CD8-positive, alpha-beta T cell (primary cell): ENCODE measurements at regions of chr5 and their contacts with region 1.

Region 1: DNA sequence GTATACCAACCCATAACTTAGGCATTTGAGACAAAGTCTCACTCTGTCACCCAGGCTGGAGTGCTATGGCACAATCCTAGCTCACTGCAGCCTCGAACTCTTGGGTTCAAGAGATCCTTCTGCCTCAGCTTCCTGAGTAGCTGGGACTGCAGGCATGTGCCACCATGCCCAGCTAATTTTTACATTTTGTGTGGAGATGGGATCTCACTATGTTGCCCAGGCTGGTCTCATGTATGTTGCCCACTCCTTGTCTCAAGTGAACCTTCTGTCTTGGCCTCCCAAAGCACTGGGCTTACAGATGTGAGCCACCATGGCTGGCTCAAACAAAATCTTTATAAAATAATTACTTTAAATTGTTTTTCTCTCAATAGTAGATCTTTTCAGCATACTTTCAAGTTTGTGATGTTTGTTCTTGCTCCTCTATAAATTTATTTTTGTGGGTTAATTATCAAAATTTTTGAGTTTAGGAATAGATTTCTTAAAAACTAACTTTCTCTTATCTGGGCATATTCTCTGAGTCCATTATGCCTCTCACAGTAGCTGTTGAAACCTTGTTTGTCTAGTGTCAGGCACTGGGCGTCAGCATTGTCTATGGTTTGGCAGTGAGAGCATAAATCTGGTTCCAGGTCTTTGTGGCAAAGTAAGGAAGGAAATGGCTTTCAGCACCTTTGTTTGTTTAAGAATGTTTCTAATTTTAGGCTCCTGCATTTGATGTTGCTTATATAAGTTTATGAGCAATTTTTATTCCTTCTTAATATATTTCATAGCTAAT is 38.7 kb downstream of the NLN start:
- DNase-seq: peak; percentile 27 to 83 (median 58)
- ATAC-seq: peak; percentile 99
- H3K4me3 ChIP-seq: no peak overlapping the region
- H3K4me3 Mint-ChIP-seq: no peak overlapping the region
- H3K27ac ChIP-seq: no peak overlapping the region
- H3K27ac Mint-ChIP-seq: no peak overlapping the region
- H3K4me1 ChIP-seq: peaks cover 8% of the 10 kb centered on the region
- H3K4me1 Mint-ChIP-seq: peaks cover 3% of the 10 kb centered on the region
- H3K27me3 ChIP-seq: no peaks in the 10 kb centered on the region
- H3K27me3 Mint-ChIP-seq: no peaks in the 10 kb centered on the region
- CTCF ChIP-seq: peak; percentile 74

Region 2: GRCh38 chr5:65749956-65750355 is 10.7 kb before region 1 on chr5:
- CTCF ChIA-PET with region 1: interaction called, 11 read pairs
- POLR2A ChIA-PET with region 1: no interaction called
- intact Hi-C with region 1: no loop called
- DNase-seq: no peak
- ATAC-seq: no peak
- H3K4me3 ChIP-seq: no peak overlapping the region
- H3K4me3 Mint-ChIP-seq: no peak overlapping the region
- H3K27ac ChIP-seq: no peak overlapping the region
- H3K27ac Mint-ChIP-seq: no peak overlapping the region
- H3K4me1 ChIP-seq: no peaks in the 10 kb centered on the region
- H3K4me1 Mint-ChIP-seq: peaks cover 5% of the 10 kb centered on the region
- H3K27me3 ChIP-seq: no peaks in the 10 kb centered on the region
- H3K27me3 Mint-ChIP-seq: no peaks in the 10 kb centered on the region
- CTCF ChIP-seq: no peak

Region 3: DNA sequence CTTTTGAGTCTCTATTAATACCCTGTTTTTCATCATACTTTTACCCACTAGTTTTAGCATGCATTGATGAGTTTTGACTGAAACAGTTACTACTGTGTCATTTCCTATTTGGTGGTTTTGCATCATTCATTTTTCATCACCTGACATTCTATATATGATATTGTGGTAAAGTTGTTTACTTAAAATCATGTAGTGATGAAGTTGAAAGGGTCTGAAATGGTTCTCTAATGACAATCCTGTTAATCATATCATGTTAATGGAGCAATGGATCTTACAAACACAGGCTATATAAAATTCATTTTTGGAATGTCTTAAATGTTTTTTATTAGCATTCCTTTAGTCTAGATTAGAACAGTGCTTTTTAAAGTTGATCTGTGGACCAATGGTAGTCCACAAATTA is 249.8 kb after region 1 on chr5:
- CTCF ChIA-PET with region 1: no interaction called
- POLR2A ChIA-PET with region 1: interaction called, 4 read pairs
- intact Hi-C with region 1: loop called (anchors 5 kb)
- DNase-seq: peak in 2 of 9 experiments; percentile 17 to 54
- ATAC-seq: peak; percentile 85
- H3K4me3 ChIP-seq: no peak overlapping the region
- H3K4me3 Mint-ChIP-seq: no peak overlapping the region
- H3K27ac ChIP-seq: peak overlapping the region in 1 of 2 experiments; percentile 37
- H3K27ac Mint-ChIP-seq: peak overlapping the region; percentile 88
- H3K4me1 ChIP-seq: peaks cover 25% of the 10 kb centered on the region
- H3K4me1 Mint-ChIP-seq: peaks cover 52% of the 10 kb centered on the region
- H3K27me3 ChIP-seq: no peaks in the 10 kb centered on the region
- H3K27me3 Mint-ChIP-seq: no peaks in the 10 kb centered on the region
- CTCF ChIP-seq: no peak

Region 4: GRCh38 chr5:66057239-66057638 is 296.5 kb after region 1 on chr5:
- CTCF ChIA-PET with region 1: no interaction called
- POLR2A ChIA-PET with region 1: no interaction called
- intact Hi-C with region 1: no loop called
- DNase-seq: no peak
- ATAC-seq: no peak
- H3K4me3 ChIP-seq: no peak overlapping the region
- H3K4me3 Mint-ChIP-seq: no peak overlapping the region
- H3K27ac ChIP-seq: no peak overlapping the region
- H3K27ac Mint-ChIP-seq: no peak overlapping the region
- H3K4me1 ChIP-seq: no peaks in the 10 kb centered on the region
- H3K4me1 Mint-ChIP-seq: peaks cover 32% of the 10 kb centered on the region
- H3K27me3 ChIP-seq: no peaks in the 10 kb centered on the region
- H3K27me3 Mint-ChIP-seq: no peaks in the 10 kb centered on the region
- CTCF ChIP-seq: no peak

Region 5: DNA sequence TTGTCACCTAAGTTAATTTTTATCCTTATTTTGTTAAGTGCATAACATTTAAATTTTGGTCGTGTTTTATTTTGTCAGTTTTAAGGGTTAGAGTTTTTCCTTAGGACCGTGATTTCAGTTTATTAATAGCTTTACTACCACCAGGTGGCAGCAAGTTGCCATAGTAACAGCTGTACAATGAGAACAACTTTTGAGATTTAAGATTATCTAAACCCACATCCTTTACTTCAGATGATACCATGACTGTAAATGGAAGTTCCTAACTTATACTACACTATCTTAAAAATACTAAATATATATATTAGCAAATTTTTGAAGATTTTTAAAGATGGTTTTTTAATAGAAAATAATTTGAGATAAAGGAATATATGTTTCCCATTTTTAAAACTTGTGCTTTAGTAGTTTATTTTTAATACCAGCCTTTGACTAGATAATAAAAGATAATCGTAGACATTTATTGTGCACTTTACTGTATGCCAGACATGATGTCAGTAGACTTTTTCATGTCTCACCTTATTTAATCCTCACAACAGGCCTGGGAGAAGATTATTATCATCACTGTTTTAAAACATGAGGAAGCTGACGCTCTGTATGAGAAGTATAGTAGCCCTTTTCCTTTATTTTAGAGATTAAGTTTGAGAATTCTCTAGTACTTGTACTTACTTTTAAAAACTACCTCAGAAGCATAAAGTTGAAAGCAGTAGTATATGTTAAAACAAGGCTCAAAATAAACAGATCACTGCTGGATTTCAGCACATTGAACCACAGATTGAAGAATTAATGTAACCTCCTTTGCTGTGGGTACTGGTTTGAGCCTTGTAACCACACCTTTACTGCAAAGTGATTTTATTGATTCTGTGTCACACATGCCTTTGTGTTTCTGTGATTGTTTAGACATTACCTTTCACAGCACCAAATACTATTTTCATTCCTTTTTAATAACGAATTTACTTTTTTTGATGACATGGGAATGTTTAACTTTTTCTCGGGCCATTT is 411.0 kb after region 1 on chr5:
- CTCF ChIA-PET with region 1: interaction called, 4 read pairs
- POLR2A ChIA-PET with region 1: no interaction called
- intact Hi-C with region 1: loop called (anchors 1 to 2 kb)
- DNase-seq: peak in 8 of 9 experiments; percentile 31 to 84 (median 60)
- ATAC-seq: peak; percentile 83
- H3K4me3 ChIP-seq: no peak overlapping the region
- H3K4me3 Mint-ChIP-seq: no peak overlapping the region
- H3K27ac ChIP-seq: peak overlapping the region; percentile 4 to 16
- H3K27ac Mint-ChIP-seq: peak overlapping the region; percentile 15
- H3K4me1 ChIP-seq: peaks cover 7% of the 10 kb centered on the region
- H3K4me1 Mint-ChIP-seq: peaks cover 18% of the 10 kb centered on the region
- H3K27me3 ChIP-seq: no peaks in the 10 kb centered on the region
- H3K27me3 Mint-ChIP-seq: no peaks in the 10 kb centered on the region
- CTCF ChIP-seq: peak; percentile 66

Region 6: DNA sequence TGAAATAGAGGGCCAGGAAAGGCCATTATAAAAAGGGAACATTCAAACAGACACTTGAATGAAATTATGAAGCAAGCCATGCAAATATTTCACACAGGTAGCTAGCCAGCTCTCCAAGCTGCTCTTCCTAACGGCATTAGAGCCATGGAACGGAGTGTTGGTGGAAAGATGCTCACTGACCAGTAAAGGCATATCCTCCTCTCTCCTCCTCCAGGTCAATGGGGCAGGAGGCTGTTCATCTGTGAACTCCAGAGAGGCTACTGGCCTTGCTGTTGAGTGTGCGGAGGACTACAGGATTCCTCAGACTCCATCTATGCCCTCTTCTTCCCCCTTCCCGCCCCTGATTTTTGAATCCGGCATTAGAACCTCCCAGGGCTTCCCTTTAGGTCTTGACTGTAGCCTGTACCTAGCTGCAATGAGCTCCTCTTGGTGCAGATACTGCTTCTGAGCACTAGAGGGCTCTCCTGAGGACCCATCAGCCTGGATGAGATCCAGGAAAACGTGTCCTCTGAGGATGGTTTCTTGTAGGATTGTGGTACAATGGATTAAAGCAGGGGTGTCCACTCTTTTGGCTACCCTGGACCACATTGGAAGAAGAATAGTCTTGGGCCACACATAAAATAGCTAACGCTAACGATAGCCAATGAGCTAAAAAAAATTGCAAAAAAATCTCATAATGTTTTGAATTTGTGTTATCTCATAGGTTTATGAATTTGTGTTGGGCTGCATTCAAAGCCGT is 545.6 kb after region 1 on chr5:
- CTCF ChIA-PET with region 1: interaction called, 4 read pairs
- POLR2A ChIA-PET with region 1: no interaction called
- intact Hi-C with region 1: loop called (anchors 1 to 10 kb)
- DNase-seq: peak in 5 of 9 experiments; percentile 16 to 54 (median 43)
- ATAC-seq: peak; percentile 57
- H3K4me3 ChIP-seq: no peak overlapping the region
- H3K4me3 Mint-ChIP-seq: no peak overlapping the region
- H3K27ac ChIP-seq: no peak overlapping the region
- H3K27ac Mint-ChIP-seq: no peak overlapping the region
- H3K4me1 ChIP-seq: no peaks in the 10 kb centered on the region
- H3K4me1 Mint-ChIP-seq: peaks cover 3% of the 10 kb centered on the region
- H3K27me3 ChIP-seq: no peaks in the 10 kb centered on the region
- H3K27me3 Mint-ChIP-seq: peaks cover 6% of the 10 kb centered on the region
- CTCF ChIP-seq: peak; percentile 71